Activated B cell treated with CpG ODN at 0.5 μM for 24 hours (primary cell): ENCODE measurements at regions of chr14 and their contacts with region 1.

Region 1: DNA sequence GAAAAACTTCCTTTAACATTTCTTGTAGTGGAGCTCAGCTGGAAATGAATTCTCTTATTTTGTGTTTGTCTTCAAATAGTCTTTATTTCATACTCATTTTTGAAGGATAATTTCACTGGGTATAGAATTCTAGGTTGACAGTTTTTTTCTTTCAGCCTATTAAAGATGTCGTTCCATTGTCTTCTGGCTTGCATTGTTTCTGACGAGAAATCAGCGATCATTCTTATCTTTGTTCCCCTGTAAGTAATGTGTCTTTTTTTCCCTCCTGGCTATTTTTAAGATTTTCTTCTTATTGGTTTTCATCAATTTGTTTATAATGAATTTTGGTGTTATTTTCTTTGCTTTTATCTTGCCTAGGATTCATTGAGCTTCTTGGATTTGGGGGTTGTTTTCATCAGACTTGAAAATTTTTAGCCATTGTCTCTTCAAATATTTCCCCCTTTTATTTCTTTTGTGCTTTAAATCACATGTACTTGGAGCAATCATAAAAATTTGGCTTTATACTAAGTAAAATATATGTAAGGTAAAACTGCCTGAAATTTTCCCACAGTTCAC is 89.4 kb downstream of the UNC79 start:
- DNase-seq: no peak
- ATAC-seq: no peak
- H3K4me3 Mint-ChIP-seq: no peak overlapping the region
- H3K27ac Mint-ChIP-seq: no peak overlapping the region
- H3K4me1 Mint-ChIP-seq: no peaks in the 10 kb centered on the region
- H3K27me3 Mint-ChIP-seq: peaks cover 7% of the 10 kb centered on the region
- CTCF ChIP-seq: no peak

Region 2: GRCh38 chr14:93533472-93534241 is 13.5 kb after region 1 on chr14:
- CTCF ChIA-PET with region 1: no interaction called
- POLR2A ChIA-PET with region 1: no interaction called
- intact Hi-C with region 1: loop called (anchors 2 kb)
- DNase-seq: no peak
- ATAC-seq: peak; percentile 79
- H3K4me3 Mint-ChIP-seq: peak overlapping the region; percentile 15
- H3K27ac Mint-ChIP-seq: no peak overlapping the region
- H3K4me1 Mint-ChIP-seq: peaks cover 30% of the 10 kb centered on the region
- H3K27me3 Mint-ChIP-seq: no peaks in the 10 kb centered on the region
- CTCF ChIP-seq: no peak

Region 3: GRCh38 chr14:93606091-93606490 is 86.0 kb after region 1 on chr14:
- CTCF ChIA-PET with region 1: no interaction called
- POLR2A ChIA-PET with region 1: no interaction called
- intact Hi-C with region 1: no loop called
- DNase-seq: no peak
- ATAC-seq: no peak
- H3K4me3 Mint-ChIP-seq: no peak overlapping the region
- H3K27ac Mint-ChIP-seq: no peak overlapping the region
- H3K4me1 Mint-ChIP-seq: no peaks in the 10 kb centered on the region
- H3K27me3 Mint-ChIP-seq: peaks cover 28% of the 10 kb centered on the region
- CTCF ChIP-seq: no peak